ENCODE measurements at regions of chr10 and their contacts with region 1.

Region 1: DNA sequence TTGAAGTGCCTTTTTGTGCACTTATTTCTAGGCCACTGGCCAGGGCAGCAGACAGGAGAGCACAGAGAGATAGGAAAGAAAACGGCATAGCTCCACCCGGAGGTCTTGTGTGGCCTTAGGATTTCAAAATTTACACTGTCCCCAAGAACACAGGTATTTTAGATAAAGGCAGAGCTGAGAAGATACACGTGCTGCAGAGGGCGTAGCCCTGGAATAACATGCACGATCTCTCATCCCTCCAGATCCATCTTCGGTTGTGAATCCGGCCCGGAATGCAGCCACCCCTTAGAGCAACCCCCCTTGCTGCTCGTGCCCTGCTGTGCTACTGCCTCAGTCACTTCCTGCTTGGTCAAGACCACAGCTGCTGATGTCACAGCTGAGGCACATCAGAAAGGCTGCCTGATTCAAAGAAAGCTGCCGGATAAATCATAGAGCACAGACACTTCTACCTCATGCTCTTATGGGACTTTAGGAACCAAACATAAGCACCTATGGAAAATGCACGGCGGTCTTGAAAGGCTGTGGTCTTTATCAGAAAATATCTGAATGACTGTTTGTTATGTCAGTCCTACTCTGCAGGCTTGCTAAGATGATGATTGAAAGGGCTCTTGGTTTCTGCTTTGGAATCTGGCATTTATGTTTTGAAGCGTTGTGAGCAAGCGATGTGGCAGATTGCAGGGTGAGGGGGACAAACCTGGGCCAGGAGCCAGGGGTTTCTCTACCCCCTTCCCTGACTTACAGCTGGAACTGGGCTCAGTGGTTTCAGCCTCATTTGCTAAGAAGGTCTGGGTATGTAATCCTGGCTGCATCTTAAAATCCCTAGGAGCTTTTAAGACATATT is 152.0 kb downstream of the SVIL start:
- DNase-seq: peak; percentile 54
- H3K4me3 Mint-ChIP-seq: no peak overlapping the region
- H3K27ac Mint-ChIP-seq: peak overlapping the region; percentile 24
- H3K4me1 Mint-ChIP-seq: peaks cover 35% of the 10 kb centered on the region
- H3K27me3 Mint-ChIP-seq: no peaks in the 10 kb centered on the region

Region 2: GRCh38 chr10:29344073-29344820 is 138.6 kb before region 1 on chr10:
- CTCF ChIA-PET with region 1: no interaction called
- POLR2A ChIA-PET with region 1: no interaction called
- DNase-seq: no peak
- H3K4me3 Mint-ChIP-seq: no peak overlapping the region
- H3K27ac Mint-ChIP-seq: no peak overlapping the region
- H3K4me1 Mint-ChIP-seq: no peaks in the 10 kb centered on the region
- H3K27me3 Mint-ChIP-seq: peaks cover 26% of the 10 kb centered on the region

Region 3: DNA sequence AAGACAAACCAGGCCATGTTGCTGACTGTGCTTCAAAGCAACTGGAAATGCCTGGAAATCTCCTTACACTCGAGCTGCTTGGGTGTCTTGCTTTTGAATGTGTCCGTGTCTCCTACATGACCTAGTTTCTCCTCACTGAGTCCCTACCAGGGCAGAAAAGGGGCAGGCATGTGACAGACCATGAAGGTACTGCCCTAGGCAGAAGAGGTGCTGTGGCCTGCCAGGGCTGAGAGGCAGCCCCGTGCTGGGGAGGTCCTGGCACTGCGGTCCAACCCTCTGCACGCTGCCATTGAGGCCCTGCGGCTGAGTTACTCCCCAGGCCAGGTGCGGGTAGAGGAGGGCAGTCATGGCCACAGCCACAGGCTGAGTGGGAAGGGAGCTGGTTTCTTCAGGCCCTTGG is 34.7 kb before region 1 on chr10:
- CTCF ChIA-PET with region 1: interaction called, 10 read pairs
- POLR2A ChIA-PET with region 1: no interaction called
- DNase-seq: no peak
- H3K4me3 Mint-ChIP-seq: no peak overlapping the region
- H3K27ac Mint-ChIP-seq: no peak overlapping the region
- H3K4me1 Mint-ChIP-seq: peaks cover 11% of the 10 kb centered on the region
- H3K27me3 Mint-ChIP-seq: no peaks in the 10 kb centered on the region

Region 4: GRCh38 chr10:29470355-29470705 is 12.5 kb before region 1 on chr10:
- CTCF ChIA-PET with region 1: no interaction called
- POLR2A ChIA-PET with region 1: no interaction called
- DNase-seq: no peak
- H3K4me3 Mint-ChIP-seq: no peak overlapping the region
- H3K27ac Mint-ChIP-seq: no peak overlapping the region
- H3K4me1 Mint-ChIP-seq: peaks cover 17% of the 10 kb centered on the region
- H3K27me3 Mint-ChIP-seq: no peaks in the 10 kb centered on the region